Left ventricle myocardium inferior (tissue), 1 donor: ENCODE measurements at regions of chr1 and their contacts with region 1.

Region 1: GRCh38 chr1:37595440-37596319 is at the start of gene GNL2:
- DNase-seq: peak; percentile 98
- H3K4me3 ChIP-seq: peak within 1 kb of the TSS; percentile 85
- H3K27ac ChIP-seq: peak within 1 kb of the TSS; percentile 85
- H3K4me1 ChIP-seq: peaks cover 27% of the 10 kb centered on the region
- H3K27me3 ChIP-seq: no peaks in the 10 kb centered on the region
- CTCF ChIP-seq: no peak
- total RNA-seq, gene GNL2: 20.1 TPM

Region 2: DNA sequence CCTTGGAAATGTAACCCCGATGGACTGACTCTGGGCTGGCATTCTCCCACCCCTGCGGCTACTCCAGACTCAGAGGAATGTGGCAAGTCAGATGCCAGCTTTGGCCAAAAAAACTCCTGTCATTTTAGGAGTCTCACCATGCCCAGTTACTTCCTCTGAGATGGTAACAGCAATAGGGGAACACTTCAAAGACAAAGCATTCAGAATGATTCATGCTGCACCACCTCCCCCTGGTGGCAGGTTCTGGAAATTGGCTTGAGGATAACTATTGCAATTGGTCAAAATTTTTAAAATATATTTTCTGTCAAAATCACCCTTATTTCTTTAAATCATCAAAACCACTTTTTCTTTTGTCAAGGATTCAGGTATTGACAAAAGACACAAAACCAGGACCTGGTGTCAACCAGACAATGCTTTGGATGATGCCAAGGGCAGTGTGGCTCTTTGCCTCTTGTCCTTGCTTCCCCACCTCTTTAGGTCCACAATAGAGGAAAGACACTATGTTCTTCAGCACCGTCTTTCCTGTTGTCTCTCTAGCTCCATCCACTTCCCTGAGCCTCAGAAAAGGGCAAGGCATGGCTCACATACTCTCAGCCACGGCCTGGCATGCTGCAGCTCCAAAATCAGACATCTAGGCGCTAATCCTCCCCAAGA is 86.8 kb after region 1 on chr1:
- intact Hi-C with region 1: loop called (anchors 5 kb)
- DNase-seq: peak; percentile 54
- H3K4me3 ChIP-seq: no peak overlapping the region
- H3K27ac ChIP-seq: no peak overlapping the region
- H3K4me1 ChIP-seq: no peaks in the 10 kb centered on the region
- H3K27me3 ChIP-seq: no peaks in the 10 kb centered on the region
- CTCF ChIP-seq: peak; percentile 86